ENCODE measurements at regions of chr15 and their contacts with region 1.

Region 1: GRCh38 chr15:98874773-98875172 is 132.8 kb downstream of the PGPEP1L start:
- DNase-seq: peak in 1 of 5 donors; percentile 49
- H3K4me3 ChIP-seq: no peak overlapping the region
- H3K27ac ChIP-seq: peak overlapping the region in 1 of 2 donors; percentile 64
- H3K4me1 ChIP-seq: peaks cover 23% of the 10 kb centered on the region
- H3K27me3 ChIP-seq: no peaks in the 10 kb centered on the region
- CTCF ChIP-seq: no peak
- EP300 ChIP-seq: no peak
- POLR2A ChIP-seq: no peak

Region 2: GRCh38 chr15:98442379-98442833 is 432.4 kb before region 1 on chr15:
- intact Hi-C with region 1: loop called in 1 of 4 experiments (anchors 5 kb)
- DNase-seq: peak; percentile 30 to 71 (median 47)
- H3K4me3 ChIP-seq: no peak overlapping the region
- H3K27ac ChIP-seq: no peak overlapping the region
- H3K4me1 ChIP-seq: no peaks in the 10 kb centered on the region
- H3K27me3 ChIP-seq: no peaks in the 10 kb centered on the region
- CTCF ChIP-seq: peak; percentile 47 to 66 (median 48)
- EP300 ChIP-seq: no peak
- POLR2A ChIP-seq: no peak

Region 3: DNA sequence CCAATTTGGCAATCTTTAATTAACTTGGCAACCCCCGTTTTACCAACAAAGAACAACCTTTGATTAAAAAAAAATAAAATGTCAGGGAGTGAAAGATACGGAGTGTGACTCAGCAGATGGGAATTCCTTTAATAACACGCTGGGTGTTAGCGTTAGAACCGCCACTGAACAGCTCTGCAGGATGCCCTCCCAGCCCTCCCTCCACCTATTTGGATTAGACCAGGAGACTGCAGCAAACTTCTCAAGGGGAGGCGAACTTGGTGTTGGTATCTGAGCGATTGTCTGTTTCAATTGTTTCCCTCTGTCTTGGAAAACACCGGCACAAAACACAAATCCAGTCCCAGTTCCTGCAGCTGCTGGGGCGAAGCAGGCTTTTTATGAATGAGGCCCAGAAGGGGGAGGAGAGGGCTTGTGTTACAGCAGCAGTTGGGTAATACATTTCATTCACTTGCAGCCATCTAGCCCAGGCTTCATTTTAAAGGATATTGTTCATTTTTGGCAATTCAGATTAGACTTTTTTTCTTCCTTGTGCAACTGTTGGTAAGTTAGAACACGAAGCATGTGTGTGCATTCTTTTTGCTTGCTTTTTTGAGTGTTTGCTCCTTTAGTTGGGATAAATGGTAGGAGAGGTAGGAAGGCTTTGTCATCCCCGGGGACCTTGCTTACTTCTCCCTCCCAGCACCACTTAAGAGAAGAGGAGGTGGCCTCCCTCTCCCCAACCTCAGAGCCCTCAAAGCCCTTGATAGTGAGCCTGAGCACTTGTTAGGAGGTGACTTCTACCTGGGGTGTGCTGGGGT is 74.1 kb before region 1 on chr15:
- intact Hi-C with region 1: no loop called
- DNase-seq: peak in 3 of 5 donors; percentile 50 to 64 (median 58)
- H3K4me3 ChIP-seq: no peak overlapping the region
- H3K27ac ChIP-seq: peak overlapping the region in 1 of 2 donors; percentile 60
- H3K4me1 ChIP-seq: peaks cover 24% of the 10 kb centered on the region
- H3K27me3 ChIP-seq: no peaks in the 10 kb centered on the region
- CTCF ChIP-seq: no peak
- EP300 ChIP-seq: no peak
- POLR2A ChIP-seq: no peak